Common myeloid progenitor, CD34-positive (primary cell): ENCODE measurements at regions of chr3 and their contacts with region 1.

Region 1: GRCh38 chr3:8441969-8442559 is 59.6 kb upstream of the LMCD1 start:
- DNase-seq: peak in 1 of 3 donors; percentile 21
- H3K4me3 ChIP-seq: no peak overlapping the region
- H3K27ac ChIP-seq: no peak overlapping the region
- H3K4me1 ChIP-seq: peaks cover 0 to 11% (median 9%) of the 10 kb centered on the region in 4 experiments
- H3K27me3 ChIP-seq: no peaks in the 10 kb centered on the region

Region 2: DNA sequence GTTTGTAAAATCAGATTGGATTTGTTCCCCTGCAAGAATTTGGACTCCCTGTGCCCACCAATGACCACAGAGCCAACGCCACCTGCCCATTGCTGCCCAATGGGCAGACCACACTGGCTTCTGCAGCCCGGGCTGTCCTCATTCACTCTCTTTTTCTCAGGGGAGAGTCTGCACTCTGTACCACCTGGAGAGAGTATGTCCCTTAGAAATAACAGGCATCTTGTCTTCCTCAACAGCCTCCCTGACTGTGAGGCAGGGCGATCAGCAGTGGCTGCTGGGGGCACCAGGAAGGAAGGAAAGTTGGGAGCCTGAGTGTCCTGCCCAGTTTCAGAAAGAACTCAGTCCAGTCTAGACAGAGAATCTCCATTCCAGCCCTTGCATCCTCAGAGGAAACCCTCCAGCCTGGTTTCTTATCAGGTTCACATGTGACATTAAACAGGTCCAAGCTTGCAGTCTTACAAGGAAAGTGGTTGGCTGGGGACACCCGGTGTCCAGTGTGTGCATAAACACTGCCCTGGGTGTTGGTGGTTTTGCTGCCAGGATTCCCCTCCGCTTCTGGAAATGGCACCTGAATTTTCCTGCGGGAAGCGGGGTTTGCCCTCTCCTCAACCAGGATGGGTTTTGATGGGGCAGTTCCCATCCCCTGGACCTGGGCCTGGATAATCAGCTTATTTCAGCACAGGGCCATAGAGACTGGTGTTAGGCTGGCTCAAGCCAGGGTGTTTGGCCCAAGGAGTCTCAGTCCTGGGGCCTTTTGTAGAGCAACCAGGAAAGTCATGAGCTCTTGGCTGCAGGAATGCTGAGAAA is 165.4 kb after region 1 on chr3:
- CTCF ChIA-PET with region 1: interaction called, 10 read pairs
- POLR2A ChIA-PET with region 1: no interaction called
- DNase-seq: peak; percentile 31 to 58 (median 58)
- H3K4me3 ChIP-seq: no peak overlapping the region
- H3K27ac ChIP-seq: no peak overlapping the region
- H3K4me1 ChIP-seq: no peaks in the 10 kb centered on the region
- H3K27me3 ChIP-seq: no peaks in the 10 kb centered on the region

Region 3: DNA sequence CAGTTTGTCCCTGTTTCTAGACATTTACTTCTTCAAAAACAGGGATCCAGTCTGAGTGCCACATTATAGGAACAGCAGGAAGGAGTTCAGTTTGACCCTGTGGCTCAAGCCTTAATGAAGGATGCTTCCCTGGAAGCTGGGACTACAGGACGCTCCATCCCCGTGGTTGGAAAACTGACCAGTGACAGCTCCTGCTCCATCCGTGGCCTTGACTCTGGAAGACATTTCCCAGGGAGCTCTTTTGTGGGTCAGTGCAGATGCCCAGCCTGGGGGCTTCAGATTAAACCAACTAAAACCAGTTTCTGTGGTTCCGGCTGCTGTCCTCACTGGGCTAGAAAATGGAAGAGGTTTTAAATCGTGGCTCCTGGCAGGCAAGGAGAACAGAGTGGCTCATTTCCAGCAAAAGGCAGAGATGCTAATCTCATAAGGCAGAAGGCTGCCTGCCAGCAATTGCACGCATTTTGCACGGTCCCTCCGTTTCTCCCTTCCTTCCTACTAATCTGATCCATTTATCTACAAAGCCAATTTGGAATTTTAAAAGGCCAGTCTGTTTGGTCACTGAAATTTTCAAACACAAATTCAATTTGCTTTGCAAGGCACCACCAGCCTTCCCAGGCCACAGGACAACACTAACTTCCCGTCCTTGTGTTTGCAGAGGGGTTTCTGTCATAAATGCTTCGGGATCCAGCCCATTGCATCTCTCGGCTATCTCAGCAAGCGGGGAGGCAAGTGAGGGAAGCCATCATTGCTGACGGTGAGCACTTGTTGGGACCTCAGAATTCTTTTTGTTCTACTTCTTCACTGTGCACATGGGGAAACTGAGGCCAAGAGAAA is 208.7 kb after region 1 on chr3:
- CTCF ChIA-PET with region 1: no interaction called
- POLR2A ChIA-PET with region 1: no interaction called
- DNase-seq: no peak
- H3K4me3 ChIP-seq: no peak overlapping the region
- H3K27ac ChIP-seq: no peak overlapping the region
- H3K4me1 ChIP-seq: no peaks in the 10 kb centered on the region
- H3K27me3 ChIP-seq: peaks cover 0 to 2% (median 0%) of the 10 kb centered on the region in 5 experiments